ENCODE measurements at regions of chr22 and their contacts with region 1.

Region 1: GRCh38 chr22:30413745-30414524 is 11.6 kb upstream of the MTFP1 start:
- DNase-seq: peak in 1 of 14 experiments; percentile 17
- ATAC-seq: peak; percentile 76
- H3K4me3 ChIP-seq: no peak overlapping the region
- H3K4me3 Mint-ChIP-seq: peak overlapping the region; percentile 13
- H3K27ac ChIP-seq: peak overlapping the region in 1 of 2 donors; percentile 43
- H3K27ac Mint-ChIP-seq: peak overlapping the region; percentile 81
- H3K4me1 ChIP-seq: peaks cover 21% of the 10 kb centered on the region
- H3K4me1 Mint-ChIP-seq: peaks cover 59% of the 10 kb centered on the region
- H3K27me3 ChIP-seq: no peaks in the 10 kb centered on the region
- H3K27me3 Mint-ChIP-seq: no peaks in the 10 kb centered on the region
- CTCF ChIP-seq: no peak

Region 2: DNA sequence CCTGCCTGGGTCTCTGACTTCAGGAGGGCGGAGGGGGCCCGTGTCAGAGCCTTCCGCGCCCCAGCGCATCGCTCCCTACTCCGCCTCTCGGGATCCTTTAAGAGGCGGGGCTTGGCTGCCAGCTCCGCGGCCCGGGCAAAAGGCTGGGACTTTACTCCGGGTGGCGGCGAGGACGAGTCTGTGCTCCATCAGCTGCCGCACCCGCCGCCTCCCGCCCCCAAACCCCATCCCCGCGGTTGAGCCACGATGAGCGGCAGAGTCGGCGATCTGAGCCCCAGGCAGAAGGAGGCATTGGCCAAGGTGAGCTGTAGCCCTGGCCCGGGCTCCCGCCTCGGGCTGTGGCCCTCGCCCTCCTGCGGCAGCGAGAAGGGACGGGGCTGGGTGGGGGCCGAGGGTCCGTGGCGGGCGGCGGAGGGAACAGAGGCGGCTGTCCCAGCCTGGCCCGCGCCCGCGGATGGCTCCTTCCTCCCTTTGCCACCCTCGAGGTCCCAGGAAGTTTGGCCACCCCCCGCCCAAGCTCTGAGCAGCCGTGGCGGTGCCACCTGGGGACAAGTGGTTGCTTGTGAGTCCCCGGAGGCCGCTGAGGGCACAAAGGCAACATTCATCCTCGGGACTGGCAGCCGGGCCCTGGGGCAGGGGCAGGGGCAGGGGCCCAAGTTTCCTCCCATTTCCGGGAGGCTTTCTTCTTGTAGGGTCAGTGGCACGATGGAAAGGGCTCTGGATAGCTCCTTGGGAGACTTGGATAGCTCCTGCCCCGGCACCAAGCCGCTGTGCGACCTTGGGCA is 16.9 kb before region 1 on chr22 and contains the start of gene SEC14L2:
- CTCF ChIA-PET with region 1: interaction called, 5 read pairs
- POLR2A ChIA-PET with region 1: interaction called, 31 read pairs
- intact Hi-C with region 1: no loop called
- DNase-seq: peak in 13 of 14 experiments; percentile 24 to 79 (median 54)
- ATAC-seq: peak; percentile 83
- H3K4me3 ChIP-seq: peak within 1 kb of the TSS; percentile 68
- H3K4me3 Mint-ChIP-seq: peak within 1 kb of the TSS; percentile 95
- H3K27ac ChIP-seq: no peak within 1 kb of the TSS
- H3K27ac Mint-ChIP-seq: peak within 1 kb of the TSS; percentile 82
- H3K4me1 ChIP-seq: peaks cover 50% of the 10 kb centered on the region
- H3K4me1 Mint-ChIP-seq: peaks cover 62% of the 10 kb centered on the region
- H3K27me3 ChIP-seq: peaks cover 0 to 2% of the 10 kb centered on the region in 2 experiments
- H3K27me3 Mint-ChIP-seq: no peaks in the 10 kb centered on the region
- CTCF ChIP-seq: no peak
- total RNA-seq, gene SEC14L2: 74.6 to 79.8 TPM

Region 3: GRCh38 chr22:30402028-30402765 is 11.7 kb before region 1 on chr22:
- CTCF ChIA-PET with region 1: no interaction called
- POLR2A ChIA-PET with region 1: interaction called, 31 read pairs
- intact Hi-C with region 1: no loop called
- DNase-seq: no peak
- ATAC-seq: no peak
- H3K4me3 ChIP-seq: no peak overlapping the region
- H3K4me3 Mint-ChIP-seq: no peak overlapping the region
- H3K27ac ChIP-seq: no peak overlapping the region
- H3K27ac Mint-ChIP-seq: no peak overlapping the region
- H3K4me1 ChIP-seq: peaks cover 20% of the 10 kb centered on the region
- H3K4me1 Mint-ChIP-seq: peaks cover 35% of the 10 kb centered on the region
- H3K27me3 ChIP-seq: no peaks in the 10 kb centered on the region
- H3K27me3 Mint-ChIP-seq: no peaks in the 10 kb centered on the region
- CTCF ChIP-seq: no peak